SK-N-SH (cell line): ENCODE measurements at regions of chr19 and their contacts with region 1.

Region 1: GRCh38 chr19:3748965-3749364 is 12.5 kb downstream of the APBA3 start:
- DNase-seq: no peak
- H3K4me3 ChIP-seq: no peak overlapping the region
- H3K27ac ChIP-seq: no peak overlapping the region
- H3K4me1 ChIP-seq: no peaks in the 10 kb centered on the region
- H3K27me3 ChIP-seq: no peaks in the 10 kb centered on the region
- CTCF ChIP-seq: no peak
- EP300 ChIP-seq: no peak
- RAD21 ChIP-seq: no peak

Region 2: GRCh38 chr19:3687774-3688706 is 60.9 kb before region 1 on chr19:
- CTCF ChIA-PET with region 1: no interaction called
- POLR2A ChIA-PET with region 1: no interaction called
- DNase-seq: no peak
- H3K4me3 ChIP-seq: no peak overlapping the region
- H3K27ac ChIP-seq: no peak overlapping the region
- H3K4me1 ChIP-seq: peaks cover 0 to 5% of the 10 kb centered on the region in 2 experiments; a peak in 1 of 4 replicates
- H3K27me3 ChIP-seq: no peaks in the 10 kb centered on the region
- CTCF ChIP-seq: no peak
- EP300 ChIP-seq: no peak
- RAD21 ChIP-seq: no peak

Region 3: GRCh38 chr19:3762501-3763459 is 13.8 kb after region 1 on chr19 and contains the start of gene MRPL54:
- CTCF ChIA-PET with region 1: interaction called, 13 read pairs
- POLR2A ChIA-PET with region 1: interaction called, 4 read pairs
- DNase-seq: peak; percentile 99
- H3K4me3 ChIP-seq: peak within 1 kb of the TSS; percentile 73 to 94
- H3K27ac ChIP-seq: peak within 1 kb of the TSS; percentile 95 to 96
- H3K4me1 ChIP-seq: peaks cover 7 to 9% of the 10 kb centered on the region in 2 experiments; a peak in 2 of 4 replicates
- H3K27me3 ChIP-seq: no peaks in the 10 kb centered on the region
- CTCF ChIP-seq: no peak
- EP300 ChIP-seq: no peak
- RAD21 ChIP-seq: no peak
- polyA plus RNA-seq, gene MRPL54: 103 and 125 TPM in 2 replicates